Right cardiac atrium (tissue), 5 donors: ENCODE measurements at regions of chr13 and their contacts with region 1.

Region 1: DNA sequence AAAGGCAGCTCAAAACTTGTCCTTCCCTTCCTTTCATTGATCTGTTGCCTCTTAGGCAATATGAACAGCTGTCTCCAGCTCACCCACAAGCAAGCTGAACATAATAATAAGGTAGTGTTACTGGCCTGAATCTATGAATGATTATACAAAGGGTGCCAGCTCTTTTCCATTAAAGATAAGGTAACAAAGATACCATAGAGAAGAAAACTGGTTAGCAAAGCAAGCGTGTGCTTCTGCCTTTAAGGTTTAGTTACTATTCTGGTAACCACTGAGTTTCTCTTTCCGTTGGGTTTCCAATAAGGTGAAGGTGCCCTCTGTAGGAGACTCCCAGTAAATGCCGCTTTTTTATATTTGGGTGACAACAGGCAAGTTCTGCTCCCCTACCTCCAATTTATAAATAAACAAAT is 12.1 kb upstream of the DACH1 start:
- DNase-seq: no peak
- ATAC-seq: peak; percentile 72 to 76
- H3K4me3 ChIP-seq: no peak overlapping the region
- H3K27ac ChIP-seq: no peak overlapping the region
- H3K4me1 ChIP-seq: peaks cover 1% of the 10 kb centered on the region
- H3K27me3 ChIP-seq: no peaks in the 10 kb centered on the region

Region 2: DNA sequence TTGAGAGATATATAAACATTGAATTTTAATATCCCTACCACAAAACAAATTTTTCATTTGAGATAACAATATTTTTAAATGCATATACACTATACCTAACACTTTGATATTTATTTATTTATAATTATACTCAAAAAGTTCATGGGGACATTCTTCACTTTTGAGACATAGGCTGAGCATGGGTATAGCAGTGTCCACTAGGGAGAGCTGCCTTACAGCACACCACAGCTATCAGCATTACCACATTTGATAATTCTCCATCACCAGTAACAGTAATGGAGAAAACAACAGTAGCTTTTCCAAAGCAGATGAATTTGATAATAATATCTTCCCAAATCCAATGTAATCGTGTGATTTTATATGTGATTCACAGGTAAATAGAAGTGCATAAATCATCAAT is 638.2 kb before region 1 on chr13:
- intact Hi-C with region 1: loop called in 1 of 4 experiments (anchors 10 kb)
- DNase-seq: no peak
- ATAC-seq: peak; percentile 56 to 64
- H3K4me3 ChIP-seq: no peak overlapping the region
- H3K27ac ChIP-seq: no peak overlapping the region
- H3K4me1 ChIP-seq: no peaks in the 10 kb centered on the region
- H3K27me3 ChIP-seq: no peaks in the 10 kb centered on the region

Region 3: DNA sequence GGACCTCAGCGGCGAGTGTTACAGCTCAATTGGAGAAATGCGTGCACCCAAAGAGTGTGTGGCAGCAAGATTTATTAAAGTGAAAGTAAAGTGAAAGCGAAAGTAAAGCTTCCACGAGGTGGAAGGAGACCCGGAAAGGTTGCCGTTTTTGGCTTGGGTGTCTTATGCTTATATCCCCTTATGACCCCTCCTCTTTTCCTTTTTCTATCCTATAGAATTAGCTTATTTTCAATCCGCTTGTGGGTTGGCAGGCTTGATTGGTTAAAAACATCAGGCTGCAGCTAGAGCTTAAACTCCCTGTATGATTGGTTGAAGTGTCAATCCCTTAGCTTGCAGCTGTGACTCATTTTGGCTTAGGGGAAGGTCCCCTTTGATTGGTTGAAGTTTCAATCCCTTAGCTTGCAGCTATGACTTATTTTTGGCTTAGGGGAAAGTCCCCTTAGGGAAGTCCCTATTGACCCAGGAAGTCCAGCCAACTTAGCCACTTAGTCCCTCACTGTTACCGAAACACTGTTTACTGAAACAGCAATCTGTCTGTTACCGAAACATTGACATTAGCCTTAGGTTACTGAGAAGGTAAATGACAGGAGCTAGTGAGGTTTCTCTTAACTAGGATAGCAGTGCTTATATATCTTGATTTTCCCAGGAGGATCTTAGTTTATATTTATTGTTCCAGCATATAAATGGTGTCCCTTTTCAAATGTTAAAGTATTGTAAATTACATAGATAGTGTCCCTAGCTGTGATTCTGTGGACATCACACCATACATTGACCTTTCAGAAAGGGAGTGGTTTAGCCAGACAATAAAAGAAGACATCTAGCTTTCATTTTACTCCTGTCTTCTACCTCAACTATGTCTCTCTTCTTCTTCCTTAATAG is 587.9 kb before region 1 on chr13:
- intact Hi-C with region 1: loop called in 1 of 4 experiments (anchors 10 kb)
- DNase-seq: peak in 2 of 3 donors; percentile 15 to 41
- ATAC-seq: peak in 1 of 2 donors; percentile 47
- H3K4me3 ChIP-seq: peak overlapping the region; percentile 64
- H3K27ac ChIP-seq: no peak overlapping the region
- H3K4me1 ChIP-seq: no peaks in the 10 kb centered on the region
- H3K27me3 ChIP-seq: no peaks in the 10 kb centered on the region